IMR-90 (cell line): ENCODE measurements at regions of chr12 and their contacts with region 1.

Region 1: GRCh38 chr12:47032644-47033043 is 46.8 kb upstream of the PCED1B start:
- DNase-seq: peak; percentile 77
- ATAC-seq: peak; percentile 86
- H3K4me3 ChIP-seq: no peak overlapping the region
- H3K27ac ChIP-seq: no peak overlapping the region
- H3K4me1 ChIP-seq: peaks cover 6% of the 10 kb centered on the region
- H3K27me3 ChIP-seq: no peaks in the 10 kb centered on the region
- CTCF ChIP-seq: peak; percentile 75
- POLR2A ChIP-seq: no peak
- RAD21 ChIP-seq: peak; percentile 86

Region 2: DNA sequence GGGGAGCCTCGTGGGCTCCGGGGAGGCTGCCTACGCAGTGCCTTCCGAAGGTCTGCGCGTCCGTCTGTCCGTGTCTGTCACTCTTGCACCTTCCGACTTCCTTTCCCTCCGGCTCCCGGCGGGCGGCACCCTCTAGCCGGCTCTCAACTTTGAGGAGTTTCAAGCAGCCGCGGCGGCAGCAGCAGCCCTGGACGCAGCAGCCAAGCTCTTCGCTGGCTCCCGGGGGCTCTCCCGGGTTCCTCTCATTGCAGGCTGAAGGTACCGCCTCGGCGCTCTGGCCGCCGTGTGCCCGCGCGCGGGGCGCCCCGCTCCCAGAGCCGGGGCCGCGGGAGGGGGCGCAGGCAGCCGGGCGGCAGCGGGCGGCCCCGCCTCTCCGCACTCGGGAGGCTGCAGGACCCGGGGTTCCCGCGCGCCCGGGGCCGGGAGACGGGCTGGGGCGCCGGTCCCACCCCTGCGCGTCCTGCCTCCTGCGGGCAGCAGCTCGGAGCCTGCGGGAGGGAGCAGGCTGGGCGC is 46.9 kb after region 1 on chr12 and contains the starts of genes AMIGO2 and PCED1B:
- CTCF ChIA-PET with region 1: interaction called, 3 read pairs
- POLR2A ChIA-PET with region 1: no interaction called
- dilution Hi-C with region 1: no loop called
- in situ Hi-C with region 1: no loop called
- intact Hi-C with region 1: loop called (anchors 5 kb)
- DNase-seq: peak; percentile 72
- ATAC-seq: peak; percentile 74
- H3K4me3 ChIP-seq: peak within 1 kb of the TSS; percentile 91
- H3K27ac ChIP-seq: peak within 1 kb of the TSS; percentile 57
- H3K4me1 ChIP-seq: peaks cover 17% of the 10 kb centered on the region
- H3K27me3 ChIP-seq: no peaks in the 10 kb centered on the region
- CTCF ChIP-seq: peak; percentile 57
- POLR2A ChIP-seq: no peak
- RAD21 ChIP-seq: peak; percentile 73
- total RNA-seq, gene AMIGO2: 31.7 and 32.6 TPM in 2 replicates
- total RNA-seq, gene PCED1B: 0.28 and 0.36 TPM in 2 replicates

Region 3: DNA sequence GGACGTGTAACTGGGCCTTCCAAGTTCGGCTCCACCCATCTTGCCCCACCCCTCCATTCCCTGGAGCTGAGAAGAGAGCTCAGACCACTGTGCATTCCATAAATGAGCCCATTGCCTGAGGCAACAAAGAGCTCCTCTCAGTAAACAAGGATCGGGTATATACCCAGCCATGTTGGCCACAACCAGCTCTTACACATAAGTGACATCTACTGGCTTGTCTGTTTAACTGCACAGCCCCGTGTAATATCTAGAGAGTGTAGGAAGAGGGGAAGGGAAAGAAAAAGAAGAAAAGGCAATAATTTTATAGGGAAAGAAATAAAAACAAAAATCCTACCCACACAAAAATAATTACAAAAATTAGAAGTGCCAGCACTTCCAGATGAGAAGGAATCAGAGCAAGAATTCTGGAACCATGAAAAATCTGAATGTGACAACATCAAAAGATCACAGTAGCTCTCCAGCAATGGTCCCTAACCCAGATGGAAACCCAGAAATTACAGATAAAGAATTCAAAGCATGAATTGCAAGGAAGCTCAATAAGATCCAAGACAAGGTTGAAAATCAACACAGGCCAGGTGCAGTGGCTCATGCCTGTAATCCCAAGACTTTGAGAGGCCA is 365.1 kb after region 1 on chr12:
- CTCF ChIA-PET with region 1: interaction called, 8 read pairs
- POLR2A ChIA-PET with region 1: no interaction called
- dilution Hi-C with region 1: no loop called
- in situ Hi-C with region 1: loop called (anchors 5 kb)
- intact Hi-C with region 1: loop called (anchors 1 kb)
- DNase-seq: peak; percentile 76
- ATAC-seq: peak; percentile 80
- H3K4me3 ChIP-seq: no peak overlapping the region
- H3K27ac ChIP-seq: no peak overlapping the region
- H3K4me1 ChIP-seq: peaks cover 4% of the 10 kb centered on the region; the same call in 1 of the 2 replicates
- H3K27me3 ChIP-seq: no peaks in the 10 kb centered on the region
- CTCF ChIP-seq: peak; percentile 60
- POLR2A ChIP-seq: no peak
- RAD21 ChIP-seq: peak; percentile 81

Region 4: GRCh38 chr12:47651368-47652254 is 619.0 kb after region 1 on chr12:
- CTCF ChIA-PET with region 1: interaction called, 4 read pairs
- POLR2A ChIA-PET with region 1: no interaction called
- dilution Hi-C with region 1: no loop called
- in situ Hi-C with region 1: no loop called
- intact Hi-C with region 1: loop called (anchors 2 kb)
- DNase-seq: peak; percentile 66
- ATAC-seq: peak; percentile 87
- H3K4me3 ChIP-seq: no peak overlapping the region
- H3K27ac ChIP-seq: no peak overlapping the region
- H3K4me1 ChIP-seq: peaks cover 6% of the 10 kb centered on the region
- H3K27me3 ChIP-seq: no peaks in the 10 kb centered on the region
- CTCF ChIP-seq: peak; percentile 61
- POLR2A ChIP-seq: no peak
- RAD21 ChIP-seq: peak; percentile 69

Region 5: DNA sequence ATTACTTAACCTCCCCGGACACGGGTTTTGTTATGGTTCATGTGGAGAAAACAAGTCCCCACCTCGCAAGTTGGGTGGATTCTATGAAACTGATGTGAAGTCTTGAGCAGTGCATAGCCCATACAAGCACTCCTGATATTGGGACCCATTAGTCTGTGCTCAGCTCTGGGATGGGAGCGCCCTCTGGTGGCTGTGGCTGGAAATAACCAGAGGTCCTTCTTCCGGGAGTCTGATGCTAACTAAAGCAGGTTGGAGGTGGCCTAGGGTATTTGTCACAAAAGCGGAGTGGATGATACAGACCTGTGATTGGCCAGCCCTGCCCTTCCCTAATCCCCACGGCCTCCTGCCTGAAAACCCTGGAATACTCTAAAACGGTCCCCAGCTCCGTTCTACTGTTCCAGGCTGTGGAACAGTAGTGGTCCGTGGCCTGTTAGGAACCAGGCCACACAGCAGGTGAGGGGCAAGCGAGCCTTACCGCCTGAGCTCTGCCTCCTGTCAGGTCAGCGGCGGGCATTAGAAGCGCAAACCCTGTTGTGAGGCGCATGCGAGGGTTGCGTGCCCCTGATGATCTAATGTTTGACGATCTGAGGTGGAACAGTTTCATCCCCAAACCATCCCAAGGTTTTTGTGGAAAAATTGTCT is 746.8 kb after region 1 on chr12:
- CTCF ChIA-PET with region 1: no interaction called
- POLR2A ChIA-PET with region 1: no interaction called
- dilution Hi-C with region 1: no loop called
- in situ Hi-C with region 1: no loop called
- intact Hi-C with region 1: loop called (anchors 10 kb)
- DNase-seq: peak; percentile 79
- ATAC-seq: peak; percentile 83
- H3K4me3 ChIP-seq: no peak overlapping the region
- H3K27ac ChIP-seq: no peak overlapping the region
- H3K4me1 ChIP-seq: peaks cover 21% of the 10 kb centered on the region
- H3K27me3 ChIP-seq: no peaks in the 10 kb centered on the region
- CTCF ChIP-seq: peak; percentile 98
- POLR2A ChIP-seq: peak; percentile 35; the same call in 1 of the 2 replicates
- RAD21 ChIP-seq: peak; percentile 96